SK-N-SH (cell line): ENCODE measurements at regions of chr10 and their contacts with region 1.

Region 1: DNA sequence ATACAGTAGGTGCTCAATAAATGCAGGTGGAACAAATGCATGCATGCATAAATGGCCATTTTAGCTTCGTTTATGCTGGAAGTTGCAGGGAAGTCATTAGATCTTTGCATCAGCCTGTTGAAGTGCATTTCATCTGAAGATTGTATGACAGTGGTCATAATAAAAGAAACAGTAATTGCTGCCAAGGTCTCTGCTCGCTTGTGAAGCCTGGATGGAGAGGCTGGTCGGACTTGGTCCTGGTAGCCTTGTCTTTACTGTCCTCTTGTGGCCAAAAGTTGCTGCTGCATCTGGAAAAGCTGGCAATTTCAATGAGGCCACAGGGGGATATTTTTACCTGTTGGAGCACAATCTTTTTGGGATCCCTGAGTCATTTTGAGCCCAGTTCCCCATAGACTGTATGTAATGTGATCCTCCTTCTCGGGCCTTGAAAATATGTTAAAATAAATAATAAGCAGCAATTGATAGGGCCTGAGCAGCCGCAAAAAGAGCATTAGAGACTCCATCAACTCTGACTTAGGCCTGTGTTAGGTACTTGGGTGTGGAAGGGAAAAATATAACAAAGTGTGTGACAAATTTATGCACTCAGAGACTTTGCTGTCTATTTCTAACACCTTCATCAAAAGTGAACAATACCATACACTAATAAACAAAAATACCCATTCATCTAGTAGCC is 31.6 kb upstream of the HABP2 start:
- DNase-seq: peak; percentile 76
- H3K4me3 ChIP-seq: no peak overlapping the region; a peak in 1 of 4 replicates
- H3K27ac ChIP-seq: no peak overlapping the region
- H3K4me1 ChIP-seq: peaks cover 3 to 9% of the 10 kb centered on the region in 2 experiments; a peak in 2 of 4 replicates
- H3K27me3 ChIP-seq: no peaks in the 10 kb centered on the region
- CTCF ChIP-seq: peak; percentile 99
- EP300 ChIP-seq: no peak
- RAD21 ChIP-seq: peak; percentile 96

Region 2: DNA sequence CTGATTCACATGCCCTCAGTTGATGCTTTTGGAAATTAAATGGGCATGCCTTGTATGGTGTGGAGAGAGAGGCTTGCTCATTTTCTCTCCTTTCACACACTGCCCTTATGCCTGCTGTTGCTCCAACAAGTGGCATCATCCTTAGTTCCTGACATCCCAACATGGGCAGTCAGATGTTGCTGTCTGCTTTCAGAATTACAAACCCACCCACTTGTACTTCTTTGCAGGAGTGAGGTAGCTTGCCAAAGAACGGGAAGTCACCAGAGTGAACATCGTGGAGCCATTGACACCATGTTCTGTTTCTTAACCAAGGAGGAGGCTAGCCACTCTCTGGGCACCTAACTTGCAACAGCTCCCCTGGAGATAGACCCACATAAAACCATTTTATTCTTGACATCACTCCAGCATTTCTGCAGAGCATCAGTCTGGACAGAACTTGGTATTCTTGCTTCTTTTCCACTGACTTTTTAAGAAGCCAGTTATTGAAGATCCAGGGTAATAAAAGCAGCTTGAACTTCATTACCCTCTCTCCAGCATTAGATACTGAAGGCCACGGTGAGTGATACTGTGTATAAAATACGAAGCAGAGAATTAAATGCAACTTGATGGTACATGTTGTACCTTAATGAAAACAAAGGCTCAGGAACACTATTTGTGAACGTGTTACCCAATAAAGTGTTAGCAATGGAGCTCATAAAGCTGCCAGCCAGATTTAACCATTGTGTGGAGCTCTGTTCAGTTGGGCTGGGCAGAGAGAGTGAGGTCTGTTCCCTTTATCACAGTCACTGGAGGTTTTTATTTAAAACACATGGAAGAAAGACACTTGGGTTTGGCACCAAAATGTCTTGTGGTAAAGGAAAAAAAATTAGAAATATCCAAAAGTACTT is 164.2 kb before region 1 on chr10:
- CTCF ChIA-PET with region 1: no interaction called
- POLR2A ChIA-PET with region 1: no interaction called
- DNase-seq: no peak
- H3K4me3 ChIP-seq: no peak overlapping the region
- H3K27ac ChIP-seq: no peak overlapping the region
- H3K4me1 ChIP-seq: no peaks in the 10 kb centered on the region; a peak in 1 of 4 replicates
- H3K27me3 ChIP-seq: no peaks in the 10 kb centered on the region; the same call in 1 of the 2 replicates
- CTCF ChIP-seq: no peak
- EP300 ChIP-seq: no peak
- RAD21 ChIP-seq: no peak

Region 3: GRCh38 chr10:113454341-113455061 is 66.8 kb before region 1 on chr10:
- CTCF ChIA-PET with region 1: interaction called, 14 read pairs
- POLR2A ChIA-PET with region 1: no interaction called
- DNase-seq: peak; percentile 69
- H3K4me3 ChIP-seq: peak overlapping the region in 1 of 2 experiments; percentile 22; a peak in 2 of 4 replicates
- H3K27ac ChIP-seq: no peak overlapping the region
- H3K4me1 ChIP-seq: peaks cover 0 to 6% of the 10 kb centered on the region in 2 experiments; a peak in 1 of 4 replicates
- H3K27me3 ChIP-seq: no peaks in the 10 kb centered on the region
- CTCF ChIP-seq: peak; percentile 75
- EP300 ChIP-seq: no peak
- RAD21 ChIP-seq: peak; percentile 66

Region 4: GRCh38 chr10:113498997-113499396 is 22.3 kb before region 1 on chr10:
- CTCF ChIA-PET with region 1: interaction called, 11 read pairs
- POLR2A ChIA-PET with region 1: no interaction called
- DNase-seq: no peak
- H3K4me3 ChIP-seq: no peak overlapping the region
- H3K27ac ChIP-seq: no peak overlapping the region
- H3K4me1 ChIP-seq: no peaks in the 10 kb centered on the region
- H3K27me3 ChIP-seq: no peaks in the 10 kb centered on the region
- CTCF ChIP-seq: no peak
- EP300 ChIP-seq: no peak
- RAD21 ChIP-seq: no peak

Region 5: DNA sequence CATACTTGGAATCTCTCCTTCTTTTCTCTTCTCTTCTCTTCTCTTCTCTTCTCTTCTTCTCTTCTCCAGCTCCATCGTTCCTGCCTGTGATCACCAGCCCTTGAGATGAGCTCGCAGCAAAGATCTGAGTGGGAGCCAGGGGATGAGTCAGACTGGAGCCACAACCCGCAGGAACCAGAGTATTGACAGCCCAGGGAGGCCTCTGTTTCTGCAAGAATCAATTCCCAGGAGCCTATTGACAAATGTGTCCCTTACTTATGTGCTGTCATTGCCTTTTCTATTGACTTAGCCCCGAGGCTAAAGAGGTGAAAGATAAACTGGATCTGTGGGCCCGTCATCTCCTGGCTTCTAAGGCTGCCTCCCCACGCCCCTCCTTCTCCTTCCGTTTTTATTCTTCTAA is 18.5 kb after region 1 on chr10:
- CTCF ChIA-PET with region 1: interaction called, 28 read pairs
- POLR2A ChIA-PET with region 1: no interaction called
- DNase-seq: no peak
- H3K4me3 ChIP-seq: no peak overlapping the region
- H3K27ac ChIP-seq: peak overlapping the region in 1 of 2 experiments; percentile 3; a peak in 1 of 4 replicates
- H3K4me1 ChIP-seq: peaks cover 0 to 14% of the 10 kb centered on the region in 2 experiments; a peak in 2 of 4 replicates
- H3K27me3 ChIP-seq: no peaks in the 10 kb centered on the region
- CTCF ChIP-seq: no peak
- EP300 ChIP-seq: no peak
- RAD21 ChIP-seq: no peak

Region 6: DNA sequence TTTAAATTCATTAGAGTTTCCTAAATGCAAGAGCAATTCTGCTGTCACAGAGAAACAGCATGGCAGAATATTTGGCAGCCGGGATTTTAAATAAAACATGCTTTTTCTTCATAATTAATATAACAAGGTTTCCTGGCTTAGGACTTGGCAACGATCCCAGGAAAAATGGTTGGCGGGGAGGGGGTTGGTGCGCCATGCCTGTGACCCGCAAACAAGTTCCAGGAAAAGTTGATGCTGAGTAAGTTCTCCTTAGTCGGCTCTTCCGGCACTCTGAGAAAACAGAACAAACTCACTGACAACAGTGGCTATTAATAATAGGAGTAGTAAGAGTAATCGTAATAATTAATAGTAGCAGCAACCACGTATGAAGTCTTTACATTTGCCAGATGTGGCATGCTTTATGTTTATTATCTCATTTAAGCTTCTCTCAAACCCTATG is 36.2 kb after region 1 on chr10:
- CTCF ChIA-PET with region 1: interaction called, 48 read pairs
- POLR2A ChIA-PET with region 1: no interaction called
- DNase-seq: peak; percentile 60
- H3K4me3 ChIP-seq: no peak overlapping the region
- H3K27ac ChIP-seq: peak overlapping the region in 1 of 2 experiments; percentile 1; a peak in 2 of 4 replicates
- H3K4me1 ChIP-seq: peaks cover 6 to 12% of the 10 kb centered on the region in 2 experiments; a peak in 3 of 4 replicates
- H3K27me3 ChIP-seq: no peaks in the 10 kb centered on the region
- CTCF ChIP-seq: no peak
- EP300 ChIP-seq: peak in 1 of 2 experiments; percentile 37; a peak in 1 of 4 replicates
- RAD21 ChIP-seq: no peak

Region 7: DNA sequence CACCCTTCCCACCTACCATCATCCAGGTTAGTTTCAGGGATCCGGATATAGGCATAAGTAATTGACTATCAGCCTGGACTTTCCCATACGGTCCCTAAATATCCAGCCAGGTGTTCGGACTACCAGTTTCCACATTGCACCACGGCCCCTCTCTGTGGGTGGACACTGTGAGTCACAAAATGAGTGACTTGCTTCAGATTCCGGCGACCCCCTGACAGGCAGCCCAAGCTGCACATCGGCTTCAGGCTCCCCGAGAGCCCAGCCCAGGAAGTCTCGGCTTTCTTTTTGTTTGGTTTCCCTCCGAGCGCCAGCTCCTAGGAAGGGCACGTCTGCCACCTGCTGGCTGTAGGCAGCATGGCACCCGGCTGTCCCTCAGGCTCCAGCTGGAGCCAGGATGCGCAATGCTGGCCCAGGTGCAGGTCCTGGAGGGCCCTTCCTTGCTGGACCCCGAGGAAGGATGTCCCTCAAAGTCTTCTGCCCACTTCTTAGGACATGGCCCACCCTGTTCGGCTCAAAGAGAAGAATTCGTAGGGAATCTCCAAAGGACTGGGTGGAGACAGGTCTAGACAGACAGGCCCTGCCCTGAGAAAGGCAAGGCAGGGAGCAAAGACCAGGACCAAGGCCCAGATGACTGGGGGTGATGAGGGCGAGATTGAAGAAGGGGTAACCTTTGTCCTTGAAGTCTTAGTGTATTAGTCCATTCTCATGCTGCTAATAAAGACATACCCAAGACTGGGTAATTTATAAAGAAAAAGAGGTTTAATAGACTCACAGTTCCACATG is 42.2 kb after region 1 on chr10:
- CTCF ChIA-PET with region 1: interaction called, 48 read pairs
- POLR2A ChIA-PET with region 1: no interaction called
- DNase-seq: peak; percentile 82
- H3K4me3 ChIP-seq: peak overlapping the region; percentile 42 to 55; a peak in 3 of 4 replicates
- H3K27ac ChIP-seq: no peak overlapping the region
- H3K4me1 ChIP-seq: no peaks in the 10 kb centered on the region; a peak in 1 of 4 replicates
- H3K27me3 ChIP-seq: no peaks in the 10 kb centered on the region; the same call in 1 of the 2 replicates
- CTCF ChIP-seq: peak; percentile 97
- EP300 ChIP-seq: no peak
- RAD21 ChIP-seq: peak; percentile 91

Region 8: GRCh38 chr10:113590616-113591015 is 69.4 kb after region 1 on chr10:
- CTCF ChIA-PET with region 1: no interaction called
- POLR2A ChIA-PET with region 1: no interaction called
- DNase-seq: no peak
- H3K4me3 ChIP-seq: no peak overlapping the region
- H3K27ac ChIP-seq: no peak overlapping the region
- H3K4me1 ChIP-seq: no peaks in the 10 kb centered on the region
- H3K27me3 ChIP-seq: peaks cover 5% of the 10 kb centered on the region; the same call in 1 of the 2 replicates
- CTCF ChIP-seq: no peak
- EP300 ChIP-seq: no peak
- RAD21 ChIP-seq: no peak